ENCODE measurements at regions of chr2 and their contacts with region 1.

Region 1: GRCh38 chr2:38106405-38107094 is 30.6 kb upstream of the CYP1B1 start:
- DNase-seq: peak; percentile 60
- H3K4me3 ChIP-seq: no peak overlapping the region
- H3K27ac ChIP-seq: peak overlapping the region; percentile 74
- H3K4me1 ChIP-seq: peaks cover 27% of the 10 kb centered on the region
- H3K27me3 ChIP-seq: no peaks in the 10 kb centered on the region
- CTCF ChIP-seq: no peak

Region 2: DNA sequence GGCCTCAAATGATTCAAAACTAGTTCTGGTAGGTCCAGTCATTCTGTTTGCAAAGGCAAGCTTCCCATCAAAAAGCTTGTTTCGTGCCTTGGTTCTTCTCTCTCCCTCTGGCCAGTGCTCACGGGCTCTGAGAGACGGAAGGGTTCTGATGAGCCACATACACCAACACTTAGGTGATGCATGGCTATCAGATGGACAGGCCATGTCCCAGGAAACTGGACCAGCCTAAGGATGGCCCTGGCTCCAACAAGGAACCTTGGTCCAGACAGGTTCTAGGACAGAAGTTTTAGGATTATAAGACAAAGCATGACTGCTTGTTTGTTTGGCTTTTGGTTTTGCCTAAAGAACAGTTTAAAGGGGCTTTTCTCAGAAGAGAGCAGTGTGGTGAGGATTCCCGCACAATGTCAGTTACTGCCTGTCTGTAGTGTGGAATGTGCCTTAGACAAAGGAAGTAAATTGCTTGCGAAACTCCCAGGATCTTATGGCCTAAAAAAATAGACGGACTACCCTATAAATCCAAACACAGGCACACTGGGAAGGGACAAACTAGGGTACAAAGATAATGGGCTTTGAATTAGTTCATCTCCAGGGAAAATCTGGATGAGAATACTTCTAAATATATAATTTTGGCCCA is 40.9 kb before region 1 on chr2:
- CTCF ChIA-PET with region 1: no interaction called
- dilution Hi-C with region 1: no loop called
- in situ Hi-C with region 1: no loop called
- intact Hi-C with region 1: no loop called
- DNase-seq: no peak
- H3K4me3 ChIP-seq: no peak overlapping the region
- H3K27ac ChIP-seq: no peak overlapping the region
- H3K4me1 ChIP-seq: no peaks in the 10 kb centered on the region
- H3K27me3 ChIP-seq: no peaks in the 10 kb centered on the region
- CTCF ChIP-seq: no peak

Region 3: DNA sequence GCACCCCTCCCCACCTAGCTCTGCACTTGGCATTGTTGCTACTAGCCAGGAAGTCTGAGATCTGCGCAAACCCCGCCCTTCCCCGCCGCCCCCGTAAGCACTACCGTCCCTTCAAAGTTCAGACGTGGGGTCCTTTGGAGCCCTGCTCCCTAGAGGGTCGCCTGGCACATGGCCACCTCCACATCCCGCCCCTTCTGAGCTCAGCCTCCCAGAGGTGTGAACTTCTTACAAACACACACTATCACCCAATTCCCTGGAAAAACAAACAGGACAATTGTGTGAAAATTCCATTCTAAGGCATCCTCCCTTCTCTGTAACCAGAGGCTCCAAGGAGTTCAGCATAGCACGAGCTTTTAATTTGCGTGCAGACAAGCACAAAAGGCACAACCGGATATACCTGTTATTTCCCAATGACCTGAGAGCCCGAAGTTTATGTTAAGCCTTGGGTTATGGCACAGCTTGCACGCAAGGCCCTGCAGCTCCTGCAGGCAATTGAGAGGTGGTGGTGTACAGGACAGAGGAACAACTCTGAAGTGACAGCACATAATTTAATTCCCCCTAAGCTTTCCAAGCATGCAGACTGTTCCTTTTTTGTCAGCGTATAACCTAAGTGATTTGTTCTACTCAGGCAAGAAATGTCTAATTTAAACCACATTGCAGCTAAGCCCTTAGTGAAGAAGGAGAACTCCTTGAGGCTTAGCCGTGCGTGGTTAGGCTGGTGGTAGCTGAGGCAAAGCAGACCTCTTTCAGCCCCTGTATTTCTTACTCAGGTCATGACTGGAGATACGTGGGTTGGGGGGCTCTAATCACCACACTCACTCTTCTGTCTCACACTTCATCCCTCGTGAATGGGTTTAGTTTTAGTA is 10.3 kb before region 1 on chr2:
- CTCF ChIA-PET with region 1: no interaction called
- dilution Hi-C with region 1: no loop called
- in situ Hi-C with region 1: no loop called
- intact Hi-C with region 1: loop called (anchors 1 kb)
- DNase-seq: peak; percentile 89
- H3K4me3 ChIP-seq: no peak overlapping the region
- H3K27ac ChIP-seq: peak overlapping the region; percentile 85
- H3K4me1 ChIP-seq: peaks cover 57% of the 10 kb centered on the region
- H3K27me3 ChIP-seq: no peaks in the 10 kb centered on the region
- CTCF ChIP-seq: no peak

Measured in mammary epithelial cell (primary cell).